ENCODE measurements at regions of chr2 and their contacts with region 1.

Region 1: DNA sequence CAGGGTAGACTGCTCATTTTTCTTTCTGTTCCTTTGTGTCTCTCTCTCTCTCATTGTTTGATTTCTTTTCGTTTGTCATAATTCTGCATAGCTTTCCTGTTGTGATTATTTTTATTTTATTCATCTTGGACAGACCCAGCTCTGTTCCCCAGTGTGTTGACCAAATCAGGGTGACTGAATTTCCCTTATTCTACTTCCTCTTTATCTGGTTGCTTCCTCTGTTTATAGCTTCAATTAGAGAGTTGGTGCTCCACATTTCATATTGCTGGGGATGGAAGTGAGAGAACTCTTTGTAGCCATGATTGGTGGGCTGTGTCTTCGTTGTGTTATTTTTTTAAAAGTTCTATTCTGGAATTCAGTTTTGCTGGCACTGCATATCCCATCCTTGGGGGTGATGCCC is 19.1 kb downstream of the PROKR1 start:
- DNase-seq: no peak
- ATAC-seq: no peak
- H3K4me3 ChIP-seq: no peak overlapping the region
- H3K27ac ChIP-seq: no peak overlapping the region
- H3K4me1 ChIP-seq: peaks cover 0 to 5% (median 0%) of the 10 kb centered on the region in 9 donors
- H3K27me3 ChIP-seq: peaks cover 0 to 21% (median 0%) of the 10 kb centered on the region in 7 donors
- CTCF ChIP-seq: no peak

Region 2: DNA sequence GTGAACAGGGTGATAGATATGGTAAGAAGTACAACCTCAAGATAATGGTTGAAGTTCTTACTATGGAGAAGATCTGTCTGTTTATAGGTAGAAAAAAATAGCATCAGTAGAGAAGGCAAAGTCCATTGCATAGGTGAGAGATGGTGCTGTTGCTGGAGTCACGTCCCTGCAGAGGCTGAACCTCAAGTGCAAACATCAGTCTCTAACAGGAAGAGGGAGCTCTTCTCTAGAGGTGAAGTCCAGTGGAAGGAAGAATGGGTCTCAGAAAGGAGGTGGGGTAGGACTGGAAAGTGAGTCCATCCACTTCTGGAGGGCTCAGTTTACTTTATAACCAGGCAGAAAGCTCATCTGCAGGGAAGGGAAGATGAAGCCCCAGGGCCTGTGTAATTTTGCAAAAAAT is 1889.8 kb before region 1 on chr2:
- intact Hi-C with region 1: loop called in 1 of 10 experiments (anchors 5 kb)
- DNase-seq: no peak
- ATAC-seq: no peak
- H3K4me3 ChIP-seq: no peak overlapping the region
- H3K27ac ChIP-seq: no peak overlapping the region
- H3K4me1 ChIP-seq: no peaks in the 10 kb centered on the region
- H3K27me3 ChIP-seq: peaks cover 0 to 3% (median 0%) of the 10 kb centered on the region in 7 donors
- CTCF ChIP-seq: no peak

Measured in heart right ventricle (tissue), 16 donors.